ENCODE measurements at regions of chr12 and their contacts with region 1.

Region 1: DNA sequence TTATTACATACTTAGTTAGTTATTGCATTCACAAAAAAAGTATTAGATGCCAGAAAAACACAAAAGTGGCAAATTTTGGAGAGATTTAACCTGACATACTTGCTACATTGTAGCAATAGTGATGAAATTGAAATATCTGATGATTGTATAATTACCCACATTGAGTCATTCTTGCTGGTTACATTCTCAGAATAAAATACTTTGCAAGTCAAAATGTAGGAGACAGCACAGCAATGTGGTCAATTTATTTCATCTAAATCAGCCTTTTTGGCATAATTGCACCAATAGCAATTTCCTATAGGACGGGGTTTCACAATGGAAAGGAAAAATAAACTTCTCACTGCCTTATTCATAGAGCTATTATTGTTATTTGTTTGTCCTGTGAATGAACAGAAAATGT is 125.0 kb upstream of the ETV6 start:
- DNase-seq: no peak
- H3K4me3 ChIP-seq: no peak overlapping the region
- H3K4me3 Mint-ChIP-seq: no peak overlapping the region
- H3K27ac Mint-ChIP-seq: no peak overlapping the region
- H3K4me1 ChIP-seq: no peaks in the 10 kb centered on the region
- H3K4me1 Mint-ChIP-seq: no peaks in the 10 kb centered on the region
- H3K27me3 ChIP-seq: no peaks in the 10 kb centered on the region; the same call in 1 of the 2 replicates
- H3K27me3 Mint-ChIP-seq: peaks cover 37% of the 10 kb centered on the region
- CTCF ChIP-seq: no peak

Region 2: GRCh38 chr12:10454531-10454930 is 1069.9 kb before region 1 on chr12:
- CTCF ChIA-PET with region 1: interaction called, 10 read pairs
- POLR2A ChIA-PET with region 1: no interaction called
- intact Hi-C with region 1: no loop called
- DNase-seq: no peak
- H3K4me3 ChIP-seq: no peak overlapping the region
- H3K4me3 Mint-ChIP-seq: no peak overlapping the region
- H3K27ac Mint-ChIP-seq: no peak overlapping the region
- H3K4me1 ChIP-seq: no peaks in the 10 kb centered on the region
- H3K4me1 Mint-ChIP-seq: no peaks in the 10 kb centered on the region
- H3K27me3 ChIP-seq: no peaks in the 10 kb centered on the region
- H3K27me3 Mint-ChIP-seq: no peaks in the 10 kb centered on the region
- CTCF ChIP-seq: no peak